ENCODE measurements at regions of chr10 and their contacts with region 1.

Region 1: DNA sequence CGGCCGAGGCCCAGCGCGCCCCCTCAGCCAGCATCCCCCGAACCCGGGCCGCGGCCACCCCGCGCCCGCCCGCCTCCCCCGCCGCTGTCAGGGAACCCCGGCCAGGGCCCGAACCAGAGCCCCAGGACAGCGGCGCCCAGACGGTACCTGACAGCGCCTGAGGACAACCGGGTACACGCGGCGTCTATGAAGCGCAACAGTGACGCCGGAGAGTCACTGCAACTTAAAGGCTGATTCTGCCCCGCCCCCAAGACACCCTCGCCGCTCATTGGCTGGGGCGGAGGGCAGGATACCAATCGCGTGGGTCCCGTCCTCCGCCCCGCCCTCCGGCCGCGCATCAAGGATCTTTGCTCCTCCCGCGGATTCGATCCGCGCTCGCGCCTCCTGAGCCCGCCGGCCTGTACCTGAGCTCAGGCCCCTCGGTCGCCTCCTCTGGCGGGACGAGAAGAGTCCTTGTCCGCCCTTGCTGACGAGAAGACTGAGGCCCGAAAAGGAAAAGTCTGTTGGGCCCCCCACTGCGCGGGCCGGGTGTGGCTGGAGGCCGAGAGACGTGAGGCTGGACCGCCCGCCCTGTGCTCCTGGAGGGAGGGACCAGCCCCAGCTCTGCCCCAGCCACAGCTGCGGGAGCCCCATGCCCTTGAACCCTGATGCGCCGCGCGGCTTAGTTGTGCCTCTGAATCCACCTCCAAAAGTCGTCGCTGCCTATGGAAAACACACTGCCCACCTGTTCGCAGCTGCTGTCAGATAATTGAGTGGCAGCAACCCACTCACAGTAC is at the start of gene OAT:
- DNase-seq: peak; percentile 99
- total RNA-seq, gene OAT: 89.5 to 113 TPM

Region 2: GRCh38 chr10:124364633-124365032 is 54.3 kb before region 1 on chr10:
- intact Hi-C with region 1: no loop called
- DNase-seq: no peak

Region 3: GRCh38 chr10:124461438-124462347 is 42.8 kb after region 1 on chr10 and contains the start of gene LHPP:
- intact Hi-C with region 1: loop called in 1 of 2 experiments (anchors 1 kb)
- DNase-seq: peak; percentile 96
- total RNA-seq, gene LHPP: 11.9 to 13.0 TPM

Region 4: GRCh38 chr10:126062131-126062981 is 1643.4 kb after region 1 on chr10:
- intact Hi-C with region 1: loop called in 1 of 2 experiments (anchors 5 kb)
- DNase-seq: peak; percentile 98

Measured in posterior vena cava (tissue), 2 donors.